ENCODE measurements at regions of chr5 and their contacts with region 1.

Region 1: GRCh38 chr5:134738133-134738962 is at the start of gene CAMLG:
- DNase-seq: peak; percentile 100
- ATAC-seq: peak; percentile 100
- total RNA-seq, gene CAMLG: 14.5 TPM

Region 2: GRCh38 chr5:134648425-134649162 is 89.8 kb before region 1 on chr5 and contains the start of gene SEC24A:
- intact Hi-C with region 1: loop called (anchors 2 kb)
- DNase-seq: peak; percentile 95
- ATAC-seq: peak; percentile 95
- total RNA-seq, gene SEC24A: 6.9 TPM

Region 3: DNA sequence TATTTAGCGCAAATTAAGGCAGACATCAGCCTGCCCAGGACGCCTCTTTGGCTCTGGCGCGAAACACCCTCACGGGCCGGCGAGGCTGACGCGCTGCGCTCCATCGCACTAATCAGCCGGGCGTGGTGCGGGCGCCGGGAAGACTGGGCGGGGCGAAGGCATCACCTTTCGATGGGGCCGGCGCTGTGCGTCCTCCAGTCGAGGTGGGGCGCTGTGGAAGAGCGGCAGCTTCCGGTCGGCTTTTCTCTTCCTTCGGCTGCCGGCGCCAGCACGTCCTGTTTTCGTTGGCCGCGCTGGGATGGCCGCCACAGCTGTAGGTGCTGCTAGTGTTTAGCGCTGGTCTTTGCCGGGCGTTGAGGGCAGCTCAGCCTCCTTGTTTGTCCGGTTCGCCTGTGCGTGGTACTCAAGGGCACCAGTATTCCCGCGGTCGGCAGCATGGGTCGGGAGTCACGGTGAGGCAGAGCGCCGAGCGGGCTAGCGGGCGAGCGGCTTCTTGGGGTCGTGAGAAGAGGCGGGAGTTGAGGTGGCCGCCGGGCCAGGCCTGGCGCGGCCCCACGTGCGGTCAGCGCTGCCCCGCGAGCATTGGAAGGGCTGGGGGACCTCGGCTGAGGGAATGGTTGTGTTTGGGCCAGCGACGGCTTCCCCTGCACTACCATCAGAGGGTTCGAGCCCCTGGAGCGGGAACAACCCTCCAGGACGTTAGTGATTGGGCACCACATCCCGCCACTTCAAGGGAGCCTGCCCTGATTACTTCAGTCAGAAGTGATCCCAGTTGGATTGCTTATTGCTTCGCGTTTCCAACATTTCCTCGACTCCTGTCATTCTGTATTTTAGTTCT is 20.4 kb after region 1 on chr5 and contains the start of gene DDX46:
- intact Hi-C with region 1: loop called (anchors 2 kb)
- DNase-seq: peak; percentile 97
- ATAC-seq: peak; percentile 99
- total RNA-seq, gene DDX46: 27.6 TPM